CD8-positive, alpha-beta T cell (primary cell): ENCODE measurements at regions of chr1 and their contacts with region 1.

Region 1: DNA sequence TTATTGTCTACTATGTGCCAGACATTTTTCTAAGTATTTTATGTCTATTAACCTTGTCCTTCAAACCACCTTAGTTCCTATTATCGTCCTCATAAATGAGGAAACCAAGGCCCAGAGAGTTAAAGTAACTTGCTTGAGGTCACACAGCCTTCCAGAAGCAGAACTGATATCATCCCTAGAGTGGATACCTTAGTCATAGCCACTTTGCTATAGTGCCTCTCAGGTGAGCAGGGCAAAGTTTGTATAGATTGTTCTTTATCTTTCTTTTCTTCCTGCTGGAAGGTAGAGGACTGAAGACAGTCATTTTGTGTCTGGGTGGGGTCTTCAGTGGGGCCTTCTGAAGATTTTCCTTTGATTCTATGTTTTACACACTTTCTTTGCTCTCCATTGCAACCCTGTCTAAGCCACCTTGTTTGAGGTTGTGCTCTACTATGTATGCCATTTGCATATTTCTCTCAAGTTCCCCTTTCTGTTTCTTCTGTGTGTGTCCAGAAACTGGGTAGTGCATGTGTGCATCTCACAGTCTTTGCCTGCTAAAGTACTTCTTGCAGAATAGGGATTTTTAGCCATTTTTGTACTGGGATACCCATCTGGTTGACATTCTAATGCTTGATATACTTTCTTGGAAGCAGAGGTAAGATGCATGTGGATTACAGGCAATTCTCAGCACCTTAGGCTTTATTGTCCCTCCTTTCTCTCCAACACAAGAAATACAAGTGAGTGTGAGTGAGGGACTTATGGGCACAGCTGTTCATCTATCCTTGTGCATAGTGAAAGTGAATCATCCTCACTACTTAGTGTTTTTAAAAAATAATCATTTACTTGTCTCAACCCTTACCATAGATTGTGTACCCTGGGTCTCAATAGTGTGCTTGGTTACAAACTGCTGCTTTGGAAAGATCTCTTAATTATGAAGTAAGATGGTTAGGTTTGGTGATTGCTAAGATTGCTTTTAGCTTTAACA is 207.6 kb upstream of the HMCN1 start:
- DNase-seq: no peak
- ATAC-seq: no peak
- H3K4me3 ChIP-seq: no peak overlapping the region
- H3K4me3 Mint-ChIP-seq: no peak overlapping the region
- H3K27ac ChIP-seq: no peak overlapping the region
- H3K27ac Mint-ChIP-seq: no peak overlapping the region
- H3K4me1 ChIP-seq: no peaks in the 10 kb centered on the region
- H3K4me1 Mint-ChIP-seq: no peaks in the 10 kb centered on the region
- H3K27me3 ChIP-seq: no peaks in the 10 kb centered on the region
- H3K27me3 Mint-ChIP-seq: no peaks in the 10 kb centered on the region
- CTCF ChIP-seq: no peak

Region 2: GRCh38 chr1:185512442-185512841 is 14.2 kb before region 1 on chr1:
- CTCF ChIA-PET with region 1: interaction called, 3 read pairs
- POLR2A ChIA-PET with region 1: no interaction called
- intact Hi-C with region 1: loop called in 1 of 2 experiments (anchors 2 kb)
- DNase-seq: no peak
- ATAC-seq: no peak
- H3K4me3 ChIP-seq: no peak overlapping the region
- H3K4me3 Mint-ChIP-seq: no peak overlapping the region
- H3K27ac ChIP-seq: no peak overlapping the region
- H3K27ac Mint-ChIP-seq: no peak overlapping the region
- H3K4me1 ChIP-seq: no peaks in the 10 kb centered on the region
- H3K4me1 Mint-ChIP-seq: no peaks in the 10 kb centered on the region
- H3K27me3 ChIP-seq: no peaks in the 10 kb centered on the region
- H3K27me3 Mint-ChIP-seq: no peaks in the 10 kb centered on the region
- CTCF ChIP-seq: no peak

Region 3: GRCh38 chr1:185864889-185865288 is 338.3 kb after region 1 on chr1:
- CTCF ChIA-PET with region 1: no interaction called
- POLR2A ChIA-PET with region 1: no interaction called
- intact Hi-C with region 1: no loop called
- DNase-seq: no peak
- ATAC-seq: no peak
- H3K4me3 ChIP-seq: no peak overlapping the region
- H3K4me3 Mint-ChIP-seq: no peak overlapping the region
- H3K27ac ChIP-seq: no peak overlapping the region
- H3K27ac Mint-ChIP-seq: no peak overlapping the region
- H3K4me1 ChIP-seq: no peaks in the 10 kb centered on the region
- H3K4me1 Mint-ChIP-seq: no peaks in the 10 kb centered on the region
- H3K27me3 ChIP-seq: no peaks in the 10 kb centered on the region
- H3K27me3 Mint-ChIP-seq: peaks cover 7% of the 10 kb centered on the region
- CTCF ChIP-seq: no peak